ENCODE measurements at regions of chr1 and their contacts with region 1.

Region 1: GRCh38 chr1:219465212-219466093 is 147.5 kb downstream of the ZC3H11B start:
- DNase-seq: no peak
- H3K4me3 Mint-ChIP-seq: no peak overlapping the region
- H3K27ac Mint-ChIP-seq: peak overlapping the region; percentile 61
- H3K4me1 Mint-ChIP-seq: peaks cover 12% of the 10 kb centered on the region
- H3K27me3 Mint-ChIP-seq: no peaks in the 10 kb centered on the region

Region 2: DNA sequence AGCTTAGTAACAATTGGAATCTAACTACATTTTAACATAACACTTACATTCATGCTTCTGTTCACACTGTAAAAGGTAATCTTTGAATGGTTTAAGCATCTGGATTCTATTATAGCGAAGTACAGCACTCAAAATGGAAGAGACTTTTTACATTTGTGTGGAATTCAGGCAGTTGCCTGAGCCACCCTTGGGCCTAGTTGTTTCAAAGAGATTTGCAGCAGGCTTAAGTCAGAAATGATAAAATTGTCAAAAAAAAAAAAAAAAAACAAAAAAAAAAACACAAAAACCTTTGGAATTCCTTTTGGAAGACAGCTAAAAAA is 91.9 kb before region 1 on chr1:
- intact Hi-C with region 1: no loop called
- DNase-seq: no peak
- H3K4me3 Mint-ChIP-seq: no peak overlapping the region
- H3K27ac Mint-ChIP-seq: no peak overlapping the region
- H3K4me1 Mint-ChIP-seq: no peaks in the 10 kb centered on the region
- H3K27me3 Mint-ChIP-seq: peaks cover 9% of the 10 kb centered on the region

Region 3: GRCh38 chr1:219427403-219427802 is 38.0 kb before region 1 on chr1:
- intact Hi-C with region 1: loop called (anchors 2 kb)
- DNase-seq: no peak
- H3K4me3 Mint-ChIP-seq: no peak overlapping the region
- H3K27ac Mint-ChIP-seq: no peak overlapping the region
- H3K4me1 Mint-ChIP-seq: peaks cover 6% of the 10 kb centered on the region
- H3K27me3 Mint-ChIP-seq: peaks cover 2% of the 10 kb centered on the region

Region 4: DNA sequence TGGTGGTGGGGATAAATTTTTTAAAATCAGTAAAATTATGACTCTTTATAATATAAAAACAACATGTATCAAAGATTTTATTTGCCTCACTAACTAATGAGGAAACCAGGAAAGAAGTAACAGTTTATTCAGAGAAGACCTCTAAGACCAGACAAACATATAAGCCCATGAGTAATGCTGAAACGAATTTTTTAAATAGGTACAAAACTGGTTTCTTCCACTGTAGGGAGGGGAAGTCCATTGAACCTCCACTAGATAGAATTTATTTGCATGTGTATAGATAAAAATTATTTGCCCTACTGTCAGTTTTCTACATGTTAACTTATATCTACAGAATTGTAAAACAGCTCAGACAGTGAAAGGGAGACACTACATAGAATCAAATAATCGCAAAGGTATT is 60.6 kb after region 1 on chr1:
- intact Hi-C with region 1: loop called (anchors 1 kb)
- DNase-seq: no peak
- H3K4me3 Mint-ChIP-seq: no peak overlapping the region
- H3K27ac Mint-ChIP-seq: no peak overlapping the region
- H3K4me1 Mint-ChIP-seq: no peaks in the 10 kb centered on the region
- H3K27me3 Mint-ChIP-seq: no peaks in the 10 kb centered on the region

Measured in activated T-helper 1 cell treated with anti-CD3 and anti-CD28 coated beads, Interleukin-12 subunit alpha, Interleukin-12 subunit beta, Interleukin-2, Interleukin-4 antibody, amounts not matched to agents 30 ng/mL and 10 ng/mL and 1 ng/mL, durations not matched to agents 14 hours and 24 hours and 36 hours (primary cell).